ENCODE measurements at regions of chrX and their contacts with region 1.

Region 1: GRCh38 chrX:16123222-16123786 is at the start of gene GRPR:
- DNase-seq: peak; percentile 39 to 81
- ATAC-seq: peak; percentile 99 to 100
- H3K4me3 ChIP-seq: no peak within 1 kb of the TSS
- H3K27ac ChIP-seq: no peak within 1 kb of the TSS
- H3K4me1 ChIP-seq: no peaks in the 10 kb centered on the region
- CTCF ChIP-seq: peak; percentile 63
- EP300 ChIP-seq: no peak
- POLR2A ChIP-seq: no peak
- RAD21 ChIP-seq: peak; percentile 72 to 74
- polyA plus RNA-seq, gene GRPR: 0.04 and 0.11 TPM in 2 replicates

Region 2: GRCh38 chrX:15930585-15930984 is 192.7 kb before region 1 on chrX:
- CTCF ChIA-PET with region 1: interaction called, 13 read pairs
- POLR2A ChIA-PET with region 1: no interaction called
- DNase-seq: peak; percentile 6 to 45
- ATAC-seq: peak; percentile 59 to 69; a peak in 3 of 6 replicates
- H3K4me3 ChIP-seq: no peak overlapping the region
- H3K27ac ChIP-seq: no peak overlapping the region
- H3K4me1 ChIP-seq: no peaks in the 10 kb centered on the region
- CTCF ChIP-seq: peak; percentile 54
- EP300 ChIP-seq: no peak
- POLR2A ChIP-seq: no peak
- RAD21 ChIP-seq: peak; percentile 68 to 70

Region 3: GRCh38 chrX:16138108-16138427 is 14.8 kb after region 1 on chrX:
- CTCF ChIA-PET with region 1: interaction called, 14 read pairs
- POLR2A ChIA-PET with region 1: no interaction called
- DNase-seq: peak in 1 of 2 experiments; percentile 27
- ATAC-seq: no peak; a peak in 1 of 6 replicates
- H3K4me3 ChIP-seq: no peak overlapping the region
- H3K27ac ChIP-seq: no peak overlapping the region
- H3K4me1 ChIP-seq: no peaks in the 10 kb centered on the region
- CTCF ChIP-seq: peak; percentile 24; the same call in 2 of the 3 replicates
- EP300 ChIP-seq: no peak
- POLR2A ChIP-seq: no peak
- RAD21 ChIP-seq: peak in 1 of 2 experiments; percentile 26; a peak in 1 of 5 replicates

Region 4: GRCh38 chrX:16212436-16212835 is 89.1 kb after region 1 on chrX:
- CTCF ChIA-PET with region 1: interaction called, 19 read pairs
- POLR2A ChIA-PET with region 1: no interaction called
- DNase-seq: peak in 1 of 2 experiments; percentile 22
- ATAC-seq: peak; percentile 54 to 80; a peak in 3 of 6 replicates
- H3K4me3 ChIP-seq: no peak overlapping the region
- H3K27ac ChIP-seq: no peak overlapping the region
- H3K4me1 ChIP-seq: peaks cover 5% of the 10 kb centered on the region; the same call in 1 of the 3 replicates
- CTCF ChIP-seq: peak; percentile 34
- EP300 ChIP-seq: no peak
- POLR2A ChIP-seq: no peak
- RAD21 ChIP-seq: peak; percentile 50 to 69; a peak in 4 of 5 replicates

Measured in A549 (cell line).